ENCODE measurements at regions of chr5 and their contacts with region 1.

Region 1: GRCh38 chr5:176830995-176831423 is 20.6 kb downstream of the UNC5A start:
- DNase-seq: no peak
- H3K4me3 ChIP-seq: no peak overlapping the region
- H3K27ac ChIP-seq: no peak overlapping the region
- H3K4me1 ChIP-seq: no peaks in the 10 kb centered on the region
- H3K27me3 ChIP-seq: no peaks in the 10 kb centered on the region
- CTCF ChIP-seq: no peak

Region 2: GRCh38 chr5:176583081-176583480 is 247.9 kb before region 1 on chr5:
- CTCF ChIA-PET with region 1: interaction called, 15 read pairs
- POLR2A ChIA-PET with region 1: no interaction called
- intact Hi-C with region 1: no loop called
- DNase-seq: no peak
- H3K4me3 ChIP-seq: no peak overlapping the region
- H3K27ac ChIP-seq: no peak overlapping the region
- H3K4me1 ChIP-seq: 0 out of 2 replicates have a peak, but pooled peaks cover 2% of the 10 kb centered on the region
- H3K27me3 ChIP-seq: no peaks in the 10 kb centered on the region; the same call in 1 of the 2 replicates
- CTCF ChIP-seq: no peak

Region 3: DNA sequence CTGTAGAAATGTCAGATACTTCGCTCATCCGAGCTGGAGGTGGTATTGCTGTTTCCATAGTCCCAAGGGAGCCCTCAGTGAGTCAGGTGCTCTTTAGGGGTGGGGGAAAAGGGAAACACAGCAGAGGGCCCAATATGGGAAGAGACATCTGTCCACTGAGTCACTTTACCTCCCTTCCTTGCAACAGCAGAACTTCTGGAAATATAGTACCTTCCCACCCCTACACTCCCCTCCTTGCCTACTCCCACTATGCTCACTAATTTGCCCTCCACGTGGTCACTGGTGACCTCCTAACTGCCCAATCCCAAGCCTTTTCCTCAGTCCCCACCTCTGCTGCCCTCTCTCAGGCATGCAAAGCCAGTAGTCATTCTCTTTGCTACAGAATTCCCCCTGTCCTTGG is 66.3 kb after region 1 on chr5:
- CTCF ChIA-PET with region 1: no interaction called
- POLR2A ChIA-PET with region 1: interaction called, 17 read pairs
- intact Hi-C with region 1: no loop called
- DNase-seq: peak in 1 of 2 experiments; percentile 22
- H3K4me3 ChIP-seq: no peak overlapping the region
- H3K27ac ChIP-seq: no peak overlapping the region
- H3K4me1 ChIP-seq: no peaks in the 10 kb centered on the region
- H3K27me3 ChIP-seq: no peaks in the 10 kb centered on the region
- CTCF ChIP-seq: no peak

Measured in PC-9 (cell line).